ENCODE measurements at regions of chr20 and their contacts with region 1.

Region 1: GRCh38 chr20:543369-544152 is at the start of gene CSNK2A1:
- DNase-seq: peak; percentile 73 to 96
- H3K4me3 ChIP-seq: peak within 1 kb of the TSS; percentile 78 to 93
- H3K27ac ChIP-seq: peak within 1 kb of the TSS; percentile 84 to 89
- H3K4me1 ChIP-seq: peaks cover 5 to 25% of the 10 kb centered on the region in 2 donors
- H3K27me3 ChIP-seq: no peaks in the 10 kb centered on the region
- CTCF ChIP-seq: no peak
- total RNA-seq, gene CSNK2A1: 74.1 TPM

Region 2: GRCh38 chr20:324177-325044 is 219.2 kb before region 1 on chr20:
- intact Hi-C with region 1: loop called (anchors 2 kb)
- DNase-seq: peak; percentile 76 to 95
- H3K4me3 ChIP-seq: peak overlapping the region; percentile 64 to 93
- H3K27ac ChIP-seq: peak overlapping the region; percentile 92 to 98
- H3K4me1 ChIP-seq: peaks cover 0 to 5% of the 10 kb centered on the region in 2 donors
- H3K27me3 ChIP-seq: no peaks in the 10 kb centered on the region
- CTCF ChIP-seq: peak in 2 of 3 experiments; percentile 31 to 36

Region 3: GRCh38 chr20:407133-407952 is 136.2 kb before region 1 on chr20:
- intact Hi-C with region 1: loop called (anchors 2 kb)
- DNase-seq: peak; percentile 20 to 81
- H3K4me3 ChIP-seq: peak overlapping the region; percentile 87 to 90
- H3K27ac ChIP-seq: peak overlapping the region; percentile 90 to 95
- H3K4me1 ChIP-seq: peaks cover 0 to 13% of the 10 kb centered on the region in 2 donors
- H3K27me3 ChIP-seq: no peaks in the 10 kb centered on the region
- CTCF ChIP-seq: peak in 2 of 3 experiments; percentile 7 to 28

Region 4: GRCh38 chr20:469746-470483 is 73.6 kb before region 1 on chr20:
- intact Hi-C with region 1: no loop called
- DNase-seq: no peak
- H3K4me3 ChIP-seq: no peak overlapping the region
- H3K27ac ChIP-seq: no peak overlapping the region
- H3K4me1 ChIP-seq: no peaks in the 10 kb centered on the region
- H3K27me3 ChIP-seq: no peaks in the 10 kb centered on the region
- CTCF ChIP-seq: no peak

Region 5: DNA sequence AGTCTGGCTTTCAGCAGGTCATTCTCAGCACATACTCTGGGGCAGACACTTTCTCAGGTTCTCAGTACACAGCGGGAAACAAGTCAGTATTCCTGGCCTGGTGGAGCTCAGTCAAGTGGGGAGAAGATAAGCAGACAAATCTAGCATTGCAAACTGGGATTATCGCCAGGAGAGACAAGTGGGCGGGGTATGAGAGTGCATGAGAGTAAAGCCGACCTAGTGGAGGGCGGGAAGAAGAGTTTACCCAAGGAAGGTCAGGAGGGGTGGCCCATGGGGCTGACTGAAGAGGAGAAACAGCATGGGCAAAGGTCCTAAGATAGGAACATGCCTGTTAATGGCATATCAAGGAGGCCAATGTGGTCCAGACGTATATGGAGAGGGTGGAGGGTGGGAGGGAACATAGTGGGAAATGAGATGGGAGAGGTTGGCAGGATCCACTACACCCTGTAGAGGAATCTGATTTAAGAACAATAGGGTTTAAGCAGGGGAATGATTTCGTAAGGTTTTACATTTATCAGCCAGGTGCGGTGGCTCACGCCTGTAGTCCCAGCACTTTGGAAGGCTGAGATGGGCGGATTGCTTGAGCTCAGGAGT is 12.5 kb after region 1 on chr20:
- intact Hi-C with region 1: no loop called
- DNase-seq: no peak
- H3K4me3 ChIP-seq: no peak overlapping the region
- H3K27ac ChIP-seq: no peak overlapping the region
- H3K4me1 ChIP-seq: no peaks in the 10 kb centered on the region
- H3K27me3 ChIP-seq: no peaks in the 10 kb centered on the region
- CTCF ChIP-seq: no peak

Region 6: DNA sequence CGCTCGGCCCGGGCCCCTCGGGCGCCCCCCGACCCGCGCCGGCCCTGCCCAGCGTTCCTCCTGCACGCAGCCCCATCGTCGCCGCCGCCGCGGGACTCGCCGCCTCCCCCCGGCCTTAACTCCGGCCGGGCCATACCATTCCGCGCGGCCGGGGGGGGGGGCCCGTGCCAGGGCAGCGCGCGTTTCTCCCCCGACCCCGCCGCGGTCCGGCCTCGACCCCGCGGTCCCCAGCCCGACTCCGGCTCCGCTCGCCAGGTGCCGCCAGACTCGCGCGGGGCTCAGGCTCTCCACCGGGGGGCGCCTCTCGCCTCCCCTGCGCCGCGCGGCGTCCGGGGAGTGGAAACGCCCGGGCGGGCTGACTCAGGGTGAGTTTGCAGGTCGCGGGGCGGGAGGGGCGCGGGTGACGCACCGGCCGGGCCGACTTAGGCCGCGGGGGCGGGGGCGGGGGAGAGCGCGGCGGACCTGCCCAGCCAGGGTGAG is 109.6 kb after region 1 on chr20 and contains the start of gene SRXN1:
- intact Hi-C with region 1: loop called (anchors 2 kb)
- DNase-seq: peak; percentile 67 to 95
- H3K4me3 ChIP-seq: peak within 1 kb of the TSS; percentile 61 to 84
- H3K27ac ChIP-seq: peak within 1 kb of the TSS; percentile 82 to 84
- H3K4me1 ChIP-seq: peaks cover 9% of the 10 kb centered on the region in 2 donors
- H3K27me3 ChIP-seq: no peaks in the 10 kb centered on the region
- CTCF ChIP-seq: peak in 2 of 3 experiments; percentile 37 to 53
- total RNA-seq, gene SRXN1: 28.8 TPM

Region 7: GRCh38 chr20:1118336-1119127 is 575.0 kb after region 1 on chr20 and contains the start of gene PSMF1:
- intact Hi-C with region 1: loop called (anchors 2 kb)
- DNase-seq: peak; percentile 77 to 96
- H3K4me3 ChIP-seq: peak within 1 kb of the TSS; percentile 99
- H3K27ac ChIP-seq: peak within 1 kb of the TSS; percentile 74 to 80
- H3K4me1 ChIP-seq: peaks cover 8 to 44% of the 10 kb centered on the region in 2 donors
- H3K27me3 ChIP-seq: no peaks in the 10 kb centered on the region
- CTCF ChIP-seq: peak; percentile 3 to 28 (median 10)
- total RNA-seq, gene PSMF1: 46.8 TPM

Measured in ascending aorta (tissue), 2 donors.